Transverse colon (tissue), 4 donors: ENCODE measurements at regions of chr11 and their contacts with region 1.

Region 1: DNA sequence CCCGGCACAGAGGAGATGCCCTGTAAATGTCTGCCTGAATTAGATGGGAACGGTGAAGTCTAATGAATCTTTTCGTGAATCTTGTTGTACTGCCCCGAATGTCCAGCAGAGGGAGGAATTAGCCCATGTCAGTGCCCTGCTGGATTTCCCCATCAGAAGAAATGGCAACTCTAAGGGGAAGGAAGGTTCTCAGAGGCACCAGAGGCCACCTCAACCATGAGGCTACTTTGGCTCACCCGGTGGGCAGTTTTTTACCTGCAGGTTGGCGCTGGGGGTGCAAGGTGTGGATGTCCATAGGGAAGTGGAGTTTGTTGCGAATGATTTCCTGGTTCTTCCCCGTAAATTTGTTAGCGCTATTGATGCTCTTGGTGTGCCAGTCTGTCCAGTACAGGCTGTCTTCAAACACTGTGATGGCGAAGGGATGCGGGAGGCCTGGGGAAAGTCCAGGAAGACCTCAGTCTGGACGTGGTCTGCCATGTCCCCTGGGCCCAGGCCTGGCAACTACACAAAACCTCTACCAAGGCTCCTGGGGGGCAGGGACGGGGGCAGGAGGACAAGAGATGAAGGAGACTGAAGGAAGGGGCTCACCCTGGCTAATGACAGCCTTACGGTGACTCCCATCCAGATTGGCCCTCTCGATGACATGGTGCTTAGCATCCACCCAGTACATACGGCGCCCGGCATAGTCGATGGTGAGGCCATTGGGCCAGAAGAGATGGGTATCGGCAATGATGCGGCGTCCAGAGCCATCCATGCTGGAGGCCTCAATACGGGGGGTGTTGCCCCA is 28.5 kb downstream of the LRP4 start:
- DNase-seq: peak; percentile 78
- H3K4me3 ChIP-seq: no peak overlapping the region
- H3K27ac ChIP-seq: no peak overlapping the region
- H3K4me1 ChIP-seq: no peaks in the 10 kb centered on the region
- H3K27me3 ChIP-seq: no peaks in the 10 kb centered on the region
- CTCF ChIP-seq: peak; percentile 84 to 94 (median 90)
- EP300 ChIP-seq: no peak
- POLR2A ChIP-seq: no peak

Region 2: GRCh38 chr11:47152953-47153950 is 263.4 kb after region 1 on chr11:
- in situ Hi-C with region 1: loop called in 2 of 4 experiments (anchors 5 to 10 kb)
- intact Hi-C with region 1: loop called (anchors 2 kb)
- DNase-seq: peak; percentile 87
- H3K4me3 ChIP-seq: no peak overlapping the region
- H3K27ac ChIP-seq: peak overlapping the region in 3 of 4 donors; percentile 34 to 56 (median 52)
- H3K4me1 ChIP-seq: peaks cover 3 to 37% (median 22%) of the 10 kb centered on the region in 4 donors
- H3K27me3 ChIP-seq: no peaks in the 10 kb centered on the region
- CTCF ChIP-seq: peak; percentile 92 to 98 (median 96)
- EP300 ChIP-seq: no peak
- POLR2A ChIP-seq: no peak

Region 3: GRCh38 chr11:47161134-47161854 is 271.4 kb after region 1 on chr11:
- in situ Hi-C with region 1: loop called in 3 of 4 experiments (anchors 5 to 10 kb)
- intact Hi-C with region 1: no loop called
- DNase-seq: peak; percentile 69
- H3K4me3 ChIP-seq: no peak overlapping the region
- H3K27ac ChIP-seq: no peak overlapping the region
- H3K4me1 ChIP-seq: peaks cover 0 to 3% (median 0%) of the 10 kb centered on the region in 4 donors
- H3K27me3 ChIP-seq: no peaks in the 10 kb centered on the region
- CTCF ChIP-seq: peak; percentile 50 to 72 (median 65)
- EP300 ChIP-seq: no peak
- POLR2A ChIP-seq: no peak

Region 4: GRCh38 chr11:47355283-47356128 is 465.6 kb after region 1 on chr11:
- in situ Hi-C with region 1: no loop called
- intact Hi-C with region 1: loop called (anchors 5 kb)
- DNase-seq: peak; percentile 97
- H3K4me3 ChIP-seq: peak overlapping the region; percentile 23 to 55 (median 44)
- H3K27ac ChIP-seq: peak overlapping the region; percentile 72 to 81 (median 76)
- H3K4me1 ChIP-seq: peaks cover 0 to 10% (median 5%) of the 10 kb centered on the region in 4 donors
- H3K27me3 ChIP-seq: no peaks in the 10 kb centered on the region
- CTCF ChIP-seq: peak; percentile 90 to 99 (median 97)
- EP300 ChIP-seq: no peak
- POLR2A ChIP-seq: no peak